Common myeloid progenitor, CD34-positive (primary cell): ENCODE measurements at regions of chr5 and their contacts with region 1.

Region 1: DNA sequence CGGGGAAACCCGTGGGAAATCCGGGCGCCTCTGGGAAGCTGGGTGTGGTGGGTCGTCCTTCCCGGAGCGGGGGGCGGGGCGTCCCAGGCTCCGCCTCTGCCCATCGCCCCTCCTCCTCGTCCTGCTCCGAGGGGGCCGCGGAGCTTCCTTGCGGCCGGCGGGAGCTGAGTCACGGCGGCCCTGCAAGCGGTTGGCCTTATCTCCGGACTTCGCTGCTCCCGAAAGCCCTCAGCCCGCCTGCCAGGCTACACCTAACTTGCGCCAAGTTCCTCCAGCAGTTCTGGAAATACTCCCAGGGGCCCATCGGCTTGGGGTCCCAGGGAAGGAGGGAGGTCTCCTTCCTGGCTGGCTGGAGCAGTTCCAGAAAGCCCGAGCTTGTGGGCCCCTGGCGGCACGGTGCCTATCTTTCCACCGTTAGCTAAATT is 54.1 kb upstream of the CDKN2AIPNL start:
- DNase-seq: peak; percentile 84 to 88 (median 86)
- H3K4me3 ChIP-seq: peak overlapping the region; percentile 18 to 78 (median 64)
- H3K27ac ChIP-seq: peak overlapping the region; percentile 54 to 88
- H3K4me1 ChIP-seq: peaks cover 0 to 50% (median 43%) of the 10 kb centered on the region in 4 experiments
- H3K27me3 ChIP-seq: no peaks in the 10 kb centered on the region

Region 2: GRCh38 chr5:134426361-134426760 is 39.5 kb before region 1 on chr5:
- CTCF ChIA-PET with region 1: no interaction called
- POLR2A ChIA-PET with region 1: no interaction called
- DNase-seq: no peak
- H3K4me3 ChIP-seq: no peak overlapping the region
- H3K27ac ChIP-seq: no peak overlapping the region
- H3K4me1 ChIP-seq: no peaks in the 10 kb centered on the region
- H3K27me3 ChIP-seq: no peaks in the 10 kb centered on the region

Region 3: DNA sequence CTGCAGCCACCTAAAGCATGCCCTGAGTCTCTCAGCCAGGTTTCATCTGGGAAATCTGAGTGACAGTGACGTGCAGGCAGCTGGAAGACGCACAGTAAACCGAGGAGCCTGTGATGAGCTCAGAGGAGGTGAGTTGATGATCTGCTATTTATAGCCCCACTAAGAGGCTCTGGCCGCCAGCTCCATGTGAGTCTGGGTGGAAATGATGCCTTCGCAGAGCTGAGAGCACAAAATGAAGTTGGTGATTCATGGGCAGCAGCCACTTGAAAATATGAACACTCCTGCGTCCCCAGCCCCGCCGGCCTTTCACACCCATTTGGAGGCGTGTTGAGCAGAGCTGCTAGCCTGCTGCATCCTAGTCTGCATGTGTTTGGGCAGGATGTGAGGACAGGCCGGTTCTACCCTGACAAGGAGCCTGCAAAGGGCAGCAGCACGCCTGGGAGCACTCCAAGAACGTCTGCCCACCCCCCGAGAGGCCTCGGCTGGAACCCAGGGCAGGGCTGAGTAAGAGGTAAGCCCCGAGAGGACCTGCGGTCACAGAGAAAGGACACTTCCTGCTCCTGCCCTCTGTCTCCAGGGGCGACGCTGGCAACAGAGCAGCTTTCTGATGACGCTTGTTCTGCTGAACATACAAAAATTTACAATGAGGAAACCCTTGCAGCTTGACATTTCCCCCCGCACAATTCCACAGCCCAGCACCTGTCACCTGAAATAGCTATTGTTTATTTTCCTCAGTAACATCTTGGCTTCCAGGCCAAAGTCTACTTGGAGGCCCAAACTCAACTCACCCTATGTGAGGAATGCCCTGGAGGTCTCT is 29.1 kb before region 1 on chr5:
- CTCF ChIA-PET with region 1: interaction called, 11 read pairs
- POLR2A ChIA-PET with region 1: no interaction called
- DNase-seq: peak; percentile 89 to 97 (median 96)
- H3K4me3 ChIP-seq: peak overlapping the region in 3 of 7 experiments; percentile 27 to 65 (median 33)
- H3K27ac ChIP-seq: peak overlapping the region; percentile 81
- H3K4me1 ChIP-seq: peaks cover 4 to 26% (median 19%) of the 10 kb centered on the region in 4 experiments
- H3K27me3 ChIP-seq: no peaks in the 10 kb centered on the region

Region 4: DNA sequence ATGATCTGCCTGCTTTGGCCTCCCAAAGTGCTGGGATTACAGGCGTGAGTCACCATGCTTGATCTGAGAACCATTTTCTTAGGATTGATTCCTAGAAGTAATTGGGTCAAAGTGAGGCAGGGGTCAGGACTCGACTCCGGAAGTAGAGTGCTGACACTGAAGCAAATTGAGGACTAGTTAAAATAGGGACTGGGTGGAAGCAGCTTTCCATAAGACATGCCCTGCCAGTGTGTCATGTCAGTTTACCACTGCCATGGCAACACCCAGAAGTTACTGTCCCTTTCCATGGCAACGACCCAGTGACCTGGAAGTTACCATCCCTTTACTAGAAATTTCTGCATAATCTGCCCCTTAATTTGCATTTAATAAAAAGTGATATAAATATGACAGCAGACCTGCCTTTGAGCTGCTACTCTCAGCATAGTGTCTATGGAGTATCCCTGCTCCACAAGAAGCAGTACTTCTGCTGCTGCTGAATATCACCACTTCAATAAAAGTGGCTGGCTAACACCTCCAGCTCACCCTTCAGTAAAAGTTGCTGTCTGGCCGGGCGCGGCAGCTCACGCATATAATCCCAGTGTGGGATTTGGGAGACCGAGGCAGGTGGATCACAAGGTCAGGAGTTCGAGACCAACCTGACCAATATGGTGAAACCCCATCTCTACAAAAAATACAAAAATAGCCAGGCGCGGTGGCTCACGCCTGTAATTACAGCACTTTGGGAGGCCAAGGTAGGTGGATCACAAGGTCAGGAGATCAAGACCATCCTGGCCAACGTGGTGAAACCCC is 11.8 kb after region 1 on chr5:
- CTCF ChIA-PET with region 1: interaction called, 11 read pairs
- POLR2A ChIA-PET with region 1: no interaction called
- DNase-seq: peak in 2 of 3 donors; percentile 19 to 41
- H3K4me3 ChIP-seq: no peak overlapping the region
- H3K27ac ChIP-seq: no peak overlapping the region
- H3K4me1 ChIP-seq: no peaks in the 10 kb centered on the region
- H3K27me3 ChIP-seq: no peaks in the 10 kb centered on the region

Region 5: DNA sequence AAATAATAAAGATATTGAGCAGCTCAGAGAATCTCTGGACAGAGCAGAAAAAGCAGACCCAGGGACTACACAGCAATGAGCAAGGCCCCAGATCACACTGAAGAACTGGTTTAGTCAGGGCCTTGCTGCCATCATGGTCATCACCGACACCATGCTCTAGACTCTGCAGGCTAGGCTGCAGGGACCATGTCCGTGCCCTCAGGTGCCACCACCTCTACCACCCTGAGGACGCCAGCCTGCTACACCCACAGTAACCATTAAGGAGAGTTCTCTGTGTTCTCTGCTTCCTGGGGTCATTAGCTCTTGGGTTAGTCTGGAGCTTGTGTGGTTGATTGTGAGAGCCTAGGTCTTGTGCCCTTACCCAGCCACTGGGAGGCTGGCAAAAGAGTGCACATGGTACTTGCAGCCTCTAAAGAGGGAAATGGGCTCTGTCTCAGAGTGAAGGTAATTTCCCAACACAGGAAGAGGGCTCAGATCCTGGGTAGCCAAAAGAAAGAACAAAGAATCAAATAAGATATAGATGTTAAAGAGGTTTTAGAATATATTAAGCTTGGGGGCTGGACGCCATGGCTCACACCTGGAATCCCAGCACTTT is 27.7 kb after region 1 on chr5:
- CTCF ChIA-PET with region 1: interaction called, 19 read pairs
- POLR2A ChIA-PET with region 1: no interaction called
- DNase-seq: no peak
- H3K4me3 ChIP-seq: no peak overlapping the region
- H3K27ac ChIP-seq: no peak overlapping the region
- H3K4me1 ChIP-seq: peaks cover 0 to 8% (median 2%) of the 10 kb centered on the region in 4 experiments
- H3K27me3 ChIP-seq: no peaks in the 10 kb centered on the region

Region 6: DNA sequence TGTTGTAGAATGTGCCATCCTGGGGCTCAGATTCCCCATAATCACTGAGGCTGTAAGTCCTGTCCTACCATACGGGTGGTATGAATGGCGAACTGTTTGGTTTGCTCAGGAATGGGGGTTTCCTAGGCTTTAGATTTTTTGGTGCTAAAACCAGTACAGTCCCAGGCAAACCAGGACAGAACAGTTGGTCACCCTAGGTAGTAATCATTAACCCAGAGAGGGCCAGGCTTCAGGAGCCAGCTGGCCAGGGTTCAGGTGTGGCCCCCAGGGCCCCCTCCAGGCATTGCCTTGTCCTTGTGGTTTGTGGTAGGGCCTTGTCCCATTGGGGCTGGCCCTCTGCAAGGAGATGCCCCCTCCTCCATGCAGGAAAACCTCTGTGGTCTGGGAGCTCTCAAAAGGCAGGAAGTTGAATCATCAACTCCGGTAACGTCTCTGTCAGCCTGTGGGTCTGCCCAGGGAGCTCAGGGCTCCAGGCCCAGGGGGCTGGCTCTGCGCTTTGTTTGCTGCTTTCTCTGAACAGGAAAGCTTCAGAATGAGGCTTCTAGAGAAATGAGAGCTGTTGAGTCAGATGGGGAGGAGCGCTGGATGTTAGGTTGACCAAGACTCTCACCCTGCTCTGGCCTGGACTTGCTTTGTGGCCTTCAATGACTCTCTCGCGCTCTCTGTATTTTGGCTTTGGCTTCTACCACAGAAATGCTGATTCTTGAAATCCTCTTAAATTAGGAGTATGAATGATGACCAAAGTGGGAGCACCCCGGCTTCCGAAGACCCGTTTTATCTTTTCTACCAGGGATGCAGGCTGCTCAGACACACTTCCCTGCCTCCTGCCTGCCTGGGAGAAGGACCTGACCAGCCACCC is 37.5 kb after region 1 on chr5:
- CTCF ChIA-PET with region 1: interaction called, 15 read pairs
- POLR2A ChIA-PET with region 1: interaction called, 5 read pairs
- DNase-seq: peak; percentile 84 to 93 (median 90)
- H3K4me3 ChIP-seq: peak overlapping the region in 3 of 7 experiments; percentile 39 to 52 (median 39)
- H3K27ac ChIP-seq: peak overlapping the region; percentile 74 to 88
- H3K4me1 ChIP-seq: peaks cover 12 to 54% (median 53%) of the 10 kb centered on the region in 4 experiments
- H3K27me3 ChIP-seq: no peaks in the 10 kb centered on the region